Activated T-helper 1 cell treated with anti-CD3 and anti-CD28 coated beads, Interleukin-12 subunit alpha, Interleukin-12 subunit beta, Interleukin-2, Interleukin-4 antibody, amounts not matched to agents 30 ng/mL and 10 ng/mL and 1 ng/mL, durations not matched to agents 14 hours and 24 hours and 36 hours (primary cell): ENCODE measurements at regions of chr5 and their contacts with region 1.

Region 1: GRCh38 chr5:115544436-115545350 is at the start of gene FEM1C:
- DNase-seq: peak; percentile 88
- H3K4me3 Mint-ChIP-seq: peak within 1 kb of the TSS; percentile 99
- H3K27ac Mint-ChIP-seq: peak within 1 kb of the TSS; percentile 100
- H3K4me1 Mint-ChIP-seq: peaks cover 45% of the 10 kb centered on the region
- H3K27me3 Mint-ChIP-seq: no peaks in the 10 kb centered on the region
- total RNA-seq, gene FEM1C: 13.9 and 14.5 TPM in 2 replicates

Region 2: GRCh38 chr5:115169487-115170133 is 375.1 kb before region 1 on chr5 and contains the start of gene TRIM36:
- intact Hi-C with region 1: loop called (anchors 1 kb)
- DNase-seq: peak; percentile 90
- H3K4me3 Mint-ChIP-seq: peak within 1 kb of the TSS; percentile 82
- H3K27ac Mint-ChIP-seq: peak within 1 kb of the TSS; percentile 37
- H3K4me1 Mint-ChIP-seq: peaks cover 6% of the 10 kb centered on the region
- H3K27me3 Mint-ChIP-seq: peaks cover 60% of the 10 kb centered on the region
- total RNA-seq, gene TRIM36: not detected in 2 replicates

Region 3: GRCh38 chr5:115262321-115263077 is 282.2 kb before region 1 on chr5 and contains the start of gene PGGT1B:
- intact Hi-C with region 1: loop called (anchors 2 kb)
- DNase-seq: peak; percentile 64
- H3K4me3 Mint-ChIP-seq: peak within 1 kb of the TSS; percentile 97
- H3K27ac Mint-ChIP-seq: peak within 1 kb of the TSS; percentile 87
- H3K4me1 Mint-ChIP-seq: peaks cover 42% of the 10 kb centered on the region
- H3K27me3 Mint-ChIP-seq: peaks cover 3% of the 10 kb centered on the region
- total RNA-seq, gene PGGT1B: 42.7 and 42.9 TPM in 2 replicates

Region 4: DNA sequence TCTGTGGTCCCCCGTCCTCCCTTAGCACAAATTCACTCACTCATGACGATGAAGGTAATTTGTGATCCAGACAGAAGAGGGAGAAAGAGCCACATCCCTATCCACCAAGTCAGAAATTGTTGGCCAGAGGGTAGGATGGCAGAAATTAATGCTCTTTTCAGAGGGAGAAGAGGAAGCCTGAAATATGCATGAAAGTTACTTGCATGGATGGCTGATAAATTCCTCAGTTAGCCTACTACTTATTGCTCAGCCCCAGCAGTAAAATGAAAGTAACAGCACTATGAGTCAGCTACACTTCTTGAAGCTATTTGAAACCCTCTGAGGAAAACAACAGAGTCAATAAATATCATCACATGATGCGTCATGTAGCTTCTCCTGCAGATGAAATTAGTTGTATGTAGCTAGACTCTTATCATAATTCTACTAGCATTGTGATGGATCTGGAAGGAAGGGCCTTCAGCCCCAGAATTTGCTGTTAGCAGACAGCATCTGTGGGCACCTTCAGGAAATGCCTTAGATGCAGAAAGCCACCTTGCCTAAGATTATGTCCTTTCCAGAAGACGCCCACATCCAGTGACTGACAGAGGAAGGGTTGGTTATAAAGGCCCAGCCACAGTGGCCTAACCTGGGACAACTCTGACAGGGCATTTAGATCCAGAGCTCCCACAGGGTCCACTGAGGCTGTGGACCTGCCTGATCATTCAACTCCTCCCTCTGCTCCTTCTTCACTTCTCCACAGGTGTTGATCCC is 167.1 kb before region 1 on chr5:
- intact Hi-C with region 1: loop called (anchors 5 kb)
- DNase-seq: no peak
- H3K4me3 Mint-ChIP-seq: no peak overlapping the region
- H3K27ac Mint-ChIP-seq: peak overlapping the region; percentile 5
- H3K4me1 Mint-ChIP-seq: peaks cover 29% of the 10 kb centered on the region
- H3K27me3 Mint-ChIP-seq: peaks cover 3% of the 10 kb centered on the region

Region 5: GRCh38 chr5:115487756-115488155 is 56.9 kb before region 1 on chr5:
- intact Hi-C with region 1: loop called (anchors 1 kb)
- DNase-seq: no peak
- H3K4me3 Mint-ChIP-seq: peak overlapping the region; percentile 12
- H3K27ac Mint-ChIP-seq: peak overlapping the region; percentile 81
- H3K4me1 Mint-ChIP-seq: peaks cover 18% of the 10 kb centered on the region
- H3K27me3 Mint-ChIP-seq: peaks cover under 1% of the 10 kb centered on the region

Region 6: GRCh38 chr5:115579747-115580173 is 35.1 kb after region 1 on chr5:
- intact Hi-C with region 1: loop called (anchors 1 kb)
- DNase-seq: no peak
- H3K4me3 Mint-ChIP-seq: no peak overlapping the region
- H3K27ac Mint-ChIP-seq: no peak overlapping the region
- H3K4me1 Mint-ChIP-seq: no peaks in the 10 kb centered on the region
- H3K27me3 Mint-ChIP-seq: no peaks in the 10 kb centered on the region

Region 7: GRCh38 chr5:115625579-115626444 is 81.1 kb after region 1 on chr5 and contains the start of gene TMED7:
- intact Hi-C with region 1: loop called (anchors 1 kb)
- DNase-seq: peak; percentile 99
- H3K4me3 Mint-ChIP-seq: no peak within 1 kb of the TSS
- H3K27ac Mint-ChIP-seq: peak within 1 kb of the TSS; percentile 88
- H3K4me1 Mint-ChIP-seq: peaks cover 32% of the 10 kb centered on the region
- H3K27me3 Mint-ChIP-seq: peaks cover 12% of the 10 kb centered on the region
- total RNA-seq, gene TMED7: 43.4 and 44.0 TPM in 2 replicates